Activated CD4-positive, alpha-beta T cell treated with anti-CD3 and anti-CD28 coated beads, Interleukin-2, amount 10 ng/mL, durations not matched to agents 7 days and 5 days (primary cell): ENCODE measurements at regions of chr6 and their contacts with region 1.

Region 1: DNA sequence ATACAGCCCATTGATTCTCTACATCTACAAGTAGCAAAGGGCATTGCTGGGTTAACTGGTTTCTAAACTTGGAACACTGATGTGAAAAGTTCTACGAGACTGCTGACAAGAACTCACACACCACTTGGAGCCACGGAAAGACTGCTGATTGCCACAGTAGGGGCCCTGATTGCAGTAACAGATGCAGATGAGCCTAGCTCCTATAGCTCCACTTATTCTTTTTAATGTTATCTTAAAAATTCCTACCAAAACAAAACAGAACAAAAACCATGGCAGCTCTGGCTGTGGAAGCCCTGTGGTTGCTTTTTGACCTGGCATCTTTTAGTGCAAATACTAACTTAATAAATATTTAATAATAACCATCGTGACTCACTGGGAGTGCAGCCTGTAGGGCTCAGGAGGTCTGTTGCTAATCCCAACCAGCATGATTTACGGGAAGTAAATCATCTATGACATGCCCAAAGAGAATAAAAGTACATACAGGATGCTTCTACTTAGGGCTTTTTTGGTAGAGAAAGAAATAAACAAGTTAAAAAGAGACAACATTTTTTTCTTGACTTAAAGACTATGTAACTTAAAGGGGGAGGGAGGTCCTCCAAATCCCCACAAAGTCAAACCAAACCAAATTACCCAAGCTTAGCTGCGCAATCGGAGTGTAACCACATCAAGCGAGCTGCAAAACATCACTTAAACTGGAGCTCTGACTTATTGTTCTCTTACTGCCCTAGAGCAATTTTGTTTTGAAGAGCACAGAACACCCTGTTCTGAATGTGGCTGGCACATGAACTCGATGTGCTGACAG is 87.2 kb downstream of the FKBP5 start:
- DNase-seq: peak; percentile 83
- H3K4me3 Mint-ChIP-seq: peak overlapping the region; percentile 69
- H3K27ac Mint-ChIP-seq: peak overlapping the region; percentile 94
- H3K4me1 Mint-ChIP-seq: peaks cover 71% of the 10 kb centered on the region
- H3K27me3 Mint-ChIP-seq: no peaks in the 10 kb centered on the region

Region 2: GRCh38 chr6:35544523-35545313 is 56.8 kb before region 1 on chr6:
- CTCF ChIA-PET with region 1: no interaction called
- POLR2A ChIA-PET with region 1: no interaction called
- DNase-seq: no peak
- H3K4me3 Mint-ChIP-seq: no peak overlapping the region
- H3K27ac Mint-ChIP-seq: no peak overlapping the region
- H3K4me1 Mint-ChIP-seq: peaks cover 4% of the 10 kb centered on the region
- H3K27me3 Mint-ChIP-seq: peaks cover 4% of the 10 kb centered on the region

Region 3: GRCh38 chr6:35590622-35591066 is 10.9 kb before region 1 on chr6:
- CTCF ChIA-PET with region 1: interaction called, 16 read pairs
- POLR2A ChIA-PET with region 1: interaction called, 3 read pairs
- DNase-seq: no peak
- H3K4me3 Mint-ChIP-seq: no peak overlapping the region
- H3K27ac Mint-ChIP-seq: peak overlapping the region; percentile 78
- H3K4me1 Mint-ChIP-seq: peaks cover 74% of the 10 kb centered on the region
- H3K27me3 Mint-ChIP-seq: no peaks in the 10 kb centered on the region